Activated B cell treated with CpG ODN at 0.5 μM for 24 hours (primary cell): ENCODE measurements at regions of chr11 and their contacts with region 1.

Region 1: GRCh38 chr11:16605894-16606783 is 132.3 kb upstream of the C11orf58 start:
- DNase-seq: peak; percentile 62
- ATAC-seq: peak; percentile 88
- H3K4me3 Mint-ChIP-seq: peak overlapping the region; percentile 75
- H3K27ac Mint-ChIP-seq: peak overlapping the region; percentile 63
- H3K4me1 Mint-ChIP-seq: peaks cover 30% of the 10 kb centered on the region
- H3K27me3 Mint-ChIP-seq: peaks cover 40% of the 10 kb centered on the region
- CTCF ChIP-seq: no peak

Region 2: GRCh38 chr11:15650105-15650938 is 955.8 kb before region 1 on chr11:
- CTCF ChIA-PET with region 1: no interaction called
- POLR2A ChIA-PET with region 1: no interaction called
- intact Hi-C with region 1: loop called (anchors 5 kb)
- DNase-seq: peak; percentile 33
- ATAC-seq: peak; percentile 83
- H3K4me3 Mint-ChIP-seq: no peak overlapping the region
- H3K27ac Mint-ChIP-seq: no peak overlapping the region
- H3K4me1 Mint-ChIP-seq: no peaks in the 10 kb centered on the region
- H3K27me3 Mint-ChIP-seq: peaks cover 22% of the 10 kb centered on the region
- CTCF ChIP-seq: no peak

Region 3: GRCh38 chr11:16587670-16588069 is 18.5 kb before region 1 on chr11:
- CTCF ChIA-PET with region 1: no interaction called
- POLR2A ChIA-PET with region 1: no interaction called
- intact Hi-C with region 1: no loop called
- DNase-seq: no peak
- ATAC-seq: no peak
- H3K4me3 Mint-ChIP-seq: no peak overlapping the region
- H3K27ac Mint-ChIP-seq: no peak overlapping the region
- H3K4me1 Mint-ChIP-seq: no peaks in the 10 kb centered on the region
- H3K27me3 Mint-ChIP-seq: no peaks in the 10 kb centered on the region
- CTCF ChIP-seq: no peak

Region 4: GRCh38 chr11:17077520-17078401 is 471.6 kb after region 1 on chr11 and contains the start of gene RPS13:
- CTCF ChIA-PET with region 1: no interaction called
- POLR2A ChIA-PET with region 1: no interaction called
- intact Hi-C with region 1: no loop called
- DNase-seq: peak; percentile 86
- ATAC-seq: peak; percentile 94
- H3K4me3 Mint-ChIP-seq: peak within 1 kb of the TSS; percentile 99
- H3K27ac Mint-ChIP-seq: peak within 1 kb of the TSS; percentile 96
- H3K4me1 Mint-ChIP-seq: peaks cover 38% of the 10 kb centered on the region
- H3K27me3 Mint-ChIP-seq: no peaks in the 10 kb centered on the region
- CTCF ChIP-seq: no peak
- total RNA-seq, gene RPS13: 1,617 and 1,778 TPM in 2 replicates